ENCODE measurements at regions of chr3 and their contacts with region 1.

Region 1: GRCh38 chr3:56467108-56467507 is 1.2 kb downstream of the ERC2 start:
- DNase-seq: peak; percentile 89
- H3K4me3 ChIP-seq: peak overlapping the region; percentile 64 to 65
- H3K27ac ChIP-seq: no peak overlapping the region
- H3K4me1 ChIP-seq: no peaks in the 10 kb centered on the region; a peak in 1 of 4 replicates
- H3K27me3 ChIP-seq: no peaks in the 10 kb centered on the region
- CTCF ChIP-seq: no peak
- EP300 ChIP-seq: no peak
- RAD21 ChIP-seq: no peak

Region 2: DNA sequence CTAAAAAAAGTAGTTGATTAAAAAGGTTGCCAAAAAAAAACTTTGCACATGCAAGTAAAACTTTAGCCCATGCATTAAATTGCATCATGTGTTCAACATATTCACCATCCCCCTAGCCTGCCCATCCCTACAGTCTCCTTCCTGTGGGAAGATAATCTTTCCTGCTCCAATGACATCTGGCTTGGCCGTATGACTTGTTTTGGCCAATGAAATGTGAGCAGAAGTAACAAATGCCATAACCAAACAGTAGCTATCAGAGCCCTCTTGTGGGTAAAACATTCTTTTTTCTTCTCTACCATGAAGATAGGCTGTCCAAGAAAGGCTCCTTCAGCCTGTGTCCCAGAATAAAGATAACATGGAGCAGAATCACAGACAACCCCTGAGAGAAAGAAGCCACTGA is 14.1 kb before region 1 on chr3:
- CTCF ChIA-PET with region 1: interaction called, 10 read pairs
- POLR2A ChIA-PET with region 1: no interaction called
- DNase-seq: no peak
- H3K4me3 ChIP-seq: no peak overlapping the region
- H3K27ac ChIP-seq: no peak overlapping the region
- H3K4me1 ChIP-seq: no peaks in the 10 kb centered on the region; a peak in 1 of 4 replicates
- H3K27me3 ChIP-seq: no peaks in the 10 kb centered on the region
- CTCF ChIP-seq: no peak
- EP300 ChIP-seq: no peak
- RAD21 ChIP-seq: no peak

Region 3: GRCh38 chr3:56477646-56478045 is 10.5 kb after region 1 on chr3:
- CTCF ChIA-PET with region 1: interaction called, 13 read pairs
- POLR2A ChIA-PET with region 1: no interaction called
- DNase-seq: no peak
- H3K4me3 ChIP-seq: no peak overlapping the region
- H3K27ac ChIP-seq: no peak overlapping the region
- H3K4me1 ChIP-seq: no peaks in the 10 kb centered on the region
- H3K27me3 ChIP-seq: no peaks in the 10 kb centered on the region; the same call in 1 of the 2 replicates
- CTCF ChIP-seq: no peak
- EP300 ChIP-seq: no peak
- RAD21 ChIP-seq: no peak

Region 4: DNA sequence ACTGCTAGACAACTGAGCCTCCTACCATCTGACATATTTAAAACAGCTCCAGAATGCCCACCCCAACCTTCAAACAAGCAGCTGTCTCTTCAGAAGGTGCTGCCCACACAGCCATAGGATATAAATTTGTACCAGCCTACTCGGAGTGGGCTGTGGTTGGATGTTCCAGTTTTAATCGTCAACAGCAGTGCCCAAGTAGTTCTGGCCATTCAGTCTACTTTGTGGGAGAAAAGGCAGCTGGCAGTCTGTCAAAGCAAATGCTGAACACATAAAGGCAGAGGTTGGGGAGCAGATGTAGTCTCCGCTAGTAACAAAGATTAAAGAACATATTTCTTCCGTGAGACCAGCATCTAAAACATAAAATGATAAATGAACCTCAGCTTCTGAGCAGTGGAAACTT is 17.0 kb after region 1 on chr3:
- CTCF ChIA-PET with region 1: interaction called, 13 read pairs
- POLR2A ChIA-PET with region 1: no interaction called
- DNase-seq: no peak
- H3K4me3 ChIP-seq: no peak overlapping the region
- H3K27ac ChIP-seq: no peak overlapping the region
- H3K4me1 ChIP-seq: no peaks in the 10 kb centered on the region
- H3K27me3 ChIP-seq: no peaks in the 10 kb centered on the region; the same call in 1 of the 2 replicates
- CTCF ChIP-seq: no peak
- EP300 ChIP-seq: no peak
- RAD21 ChIP-seq: no peak

Region 5: GRCh38 chr3:56612146-56612545 is 145.0 kb after region 1 on chr3:
- CTCF ChIA-PET with region 1: no interaction called
- POLR2A ChIA-PET with region 1: no interaction called
- DNase-seq: no peak
- H3K4me3 ChIP-seq: no peak overlapping the region
- H3K27ac ChIP-seq: no peak overlapping the region
- H3K4me1 ChIP-seq: no peaks in the 10 kb centered on the region
- H3K27me3 ChIP-seq: no peaks in the 10 kb centered on the region
- CTCF ChIP-seq: no peak
- EP300 ChIP-seq: no peak
- RAD21 ChIP-seq: no peak

Region 6: DNA sequence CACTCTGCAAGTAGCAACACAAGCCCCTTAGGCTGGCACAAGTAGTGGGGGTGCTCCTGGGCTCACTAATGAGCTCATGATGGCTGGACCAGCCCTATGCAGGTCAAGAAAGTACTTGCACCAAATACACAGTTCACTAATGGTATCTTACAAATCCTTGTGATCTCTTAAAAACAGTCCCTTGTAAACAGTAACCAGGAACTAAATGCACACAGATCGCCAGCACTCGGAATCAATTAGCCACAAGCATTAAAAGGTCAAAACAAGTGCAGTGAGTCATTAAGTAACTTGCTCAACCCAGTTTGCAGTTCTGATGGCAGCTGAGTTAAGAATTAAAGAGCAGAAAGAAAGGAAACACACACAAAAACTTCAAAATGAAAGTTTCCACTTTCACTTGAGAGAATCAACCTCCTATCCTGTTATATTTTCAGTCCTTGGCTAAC is 291.5 kb after region 1 on chr3:
- CTCF ChIA-PET with region 1: no interaction called
- POLR2A ChIA-PET with region 1: no interaction called
- DNase-seq: peak; percentile 30
- H3K4me3 ChIP-seq: peak overlapping the region in 1 of 2 experiments; percentile 24; a peak in 1 of 4 replicates
- H3K27ac ChIP-seq: peak overlapping the region; percentile 62 to 75
- H3K4me1 ChIP-seq: peaks cover 0 to 17% of the 10 kb centered on the region in 2 experiments; a peak in 3 of 4 replicates
- H3K27me3 ChIP-seq: no peaks in the 10 kb centered on the region
- CTCF ChIP-seq: no peak
- EP300 ChIP-seq: peak in 1 of 2 experiments; percentile 16; a peak in 1 of 4 replicates
- RAD21 ChIP-seq: 0 out of 2 replicates have a peak, but pooled peaks have one; percentile 5